Activated CD4-positive, alpha-beta T cell treated with anti-CD3 and anti-CD28 coated beads, Interleukin-2, amount 10 ng/mL, durations not matched to agents 24 days and 14 days (primary cell): ENCODE measurements at regions of chr3 and their contacts with region 1.

Region 1: GRCh38 chr3:177426878-177427495 is 229.7 kb upstream of the TBL1XR1 start:
- DNase-seq: peak; percentile 88
- H3K4me3 Mint-ChIP-seq: peak overlapping the region; percentile 65
- H3K27ac Mint-ChIP-seq: peak overlapping the region; percentile 91
- H3K4me1 Mint-ChIP-seq: peaks cover 31% of the 10 kb centered on the region
- H3K27me3 Mint-ChIP-seq: peaks cover 9% of the 10 kb centered on the region

Region 2: DNA sequence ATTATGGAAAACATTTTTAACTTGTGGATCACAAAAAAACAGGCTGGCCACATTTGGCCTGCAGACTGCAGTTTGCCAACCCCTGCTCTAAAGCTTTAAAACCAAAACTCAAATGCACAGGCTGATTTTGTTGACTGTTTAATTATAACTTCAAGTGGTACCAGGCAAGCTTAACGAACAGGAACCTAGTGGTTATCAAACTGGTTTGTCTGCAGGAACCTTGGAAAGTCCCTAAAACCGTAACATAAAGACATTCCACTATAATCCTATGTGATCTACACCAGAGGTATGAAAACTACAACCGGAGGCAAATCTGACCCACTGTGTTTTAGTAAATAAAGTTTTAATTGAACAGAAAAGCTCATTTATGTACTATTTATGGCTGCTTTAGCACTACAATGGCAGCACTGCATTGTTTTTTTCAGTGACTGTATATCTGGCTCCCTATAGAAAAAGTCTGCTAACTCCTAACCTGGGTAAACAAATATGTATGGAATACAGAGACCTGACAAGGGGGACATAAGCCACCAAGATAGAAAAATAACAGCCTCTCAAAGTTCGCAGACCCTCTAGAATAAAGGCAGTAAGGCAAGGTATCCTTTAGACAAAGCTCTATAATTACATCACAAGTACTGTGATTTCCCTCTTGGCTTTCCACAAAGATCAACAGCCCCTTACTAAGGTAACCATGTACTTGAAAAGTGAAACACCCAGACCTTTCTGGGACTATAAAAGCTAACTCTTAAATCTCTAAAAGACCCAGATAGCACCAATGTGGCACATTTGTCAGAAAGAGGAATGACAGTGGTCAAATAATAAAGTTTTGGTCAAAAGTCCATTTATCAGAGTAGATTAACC is 281.8 kb before region 1 on chr3:
- intact Hi-C with region 1: loop called (anchors 2 kb)
- DNase-seq: peak; percentile 81
- H3K4me3 Mint-ChIP-seq: peak overlapping the region; percentile 72
- H3K27ac Mint-ChIP-seq: peak overlapping the region; percentile 82
- H3K4me1 Mint-ChIP-seq: peaks cover 54% of the 10 kb centered on the region
- H3K27me3 Mint-ChIP-seq: no peaks in the 10 kb centered on the region

Region 3: GRCh38 chr3:177337541-177338331 is 89.3 kb before region 1 on chr3:
- intact Hi-C with region 1: loop called (anchors 1 kb)
- DNase-seq: peak; percentile 87
- H3K4me3 Mint-ChIP-seq: peak overlapping the region; percentile 29
- H3K27ac Mint-ChIP-seq: peak overlapping the region; percentile 84
- H3K4me1 Mint-ChIP-seq: peaks cover 41% of the 10 kb centered on the region
- H3K27me3 Mint-ChIP-seq: no peaks in the 10 kb centered on the region

Region 4: DNA sequence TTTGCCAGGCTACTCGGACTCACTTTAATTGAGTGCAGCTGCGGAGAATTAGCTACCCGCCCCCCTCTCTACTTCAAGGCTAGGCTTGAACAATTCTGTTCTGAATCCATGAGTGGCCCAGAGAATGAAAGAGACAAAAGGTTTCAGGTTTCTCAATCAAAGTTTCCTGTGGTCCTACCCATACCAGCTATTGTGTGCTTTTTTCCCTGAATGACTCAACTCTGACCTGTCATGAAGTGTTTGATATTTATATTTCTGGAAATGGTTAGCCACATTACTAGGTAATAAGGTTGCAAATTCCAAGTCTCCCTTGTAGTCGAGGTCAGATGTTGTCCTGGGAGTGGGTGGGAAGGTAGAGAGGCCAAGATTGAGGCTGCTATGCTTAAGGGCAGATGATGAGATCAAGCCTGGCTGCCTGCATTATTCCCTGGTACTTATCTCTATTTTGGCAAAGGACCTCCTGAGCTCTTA is 163.0 kb after region 1 on chr3:
- intact Hi-C with region 1: loop called (anchors 5 kb)
- DNase-seq: no peak
- H3K4me3 Mint-ChIP-seq: no peak overlapping the region
- H3K27ac Mint-ChIP-seq: peak overlapping the region; percentile 12
- H3K4me1 Mint-ChIP-seq: peaks cover 28% of the 10 kb centered on the region
- H3K27me3 Mint-ChIP-seq: no peaks in the 10 kb centered on the region

Region 5: GRCh38 chr3:177787279-177788041 is 360.5 kb after region 1 on chr3:
- intact Hi-C with region 1: loop called (anchors 1 kb)
- DNase-seq: peak; percentile 61
- H3K4me3 Mint-ChIP-seq: no peak overlapping the region
- H3K27ac Mint-ChIP-seq: peak overlapping the region; percentile 60
- H3K4me1 Mint-ChIP-seq: peaks cover 14% of the 10 kb centered on the region
- H3K27me3 Mint-ChIP-seq: no peaks in the 10 kb centered on the region